CD4-positive, alpha-beta T cell (primary cell): ENCODE measurements at regions of chr11 and their contacts with region 1.

Region 1: DNA sequence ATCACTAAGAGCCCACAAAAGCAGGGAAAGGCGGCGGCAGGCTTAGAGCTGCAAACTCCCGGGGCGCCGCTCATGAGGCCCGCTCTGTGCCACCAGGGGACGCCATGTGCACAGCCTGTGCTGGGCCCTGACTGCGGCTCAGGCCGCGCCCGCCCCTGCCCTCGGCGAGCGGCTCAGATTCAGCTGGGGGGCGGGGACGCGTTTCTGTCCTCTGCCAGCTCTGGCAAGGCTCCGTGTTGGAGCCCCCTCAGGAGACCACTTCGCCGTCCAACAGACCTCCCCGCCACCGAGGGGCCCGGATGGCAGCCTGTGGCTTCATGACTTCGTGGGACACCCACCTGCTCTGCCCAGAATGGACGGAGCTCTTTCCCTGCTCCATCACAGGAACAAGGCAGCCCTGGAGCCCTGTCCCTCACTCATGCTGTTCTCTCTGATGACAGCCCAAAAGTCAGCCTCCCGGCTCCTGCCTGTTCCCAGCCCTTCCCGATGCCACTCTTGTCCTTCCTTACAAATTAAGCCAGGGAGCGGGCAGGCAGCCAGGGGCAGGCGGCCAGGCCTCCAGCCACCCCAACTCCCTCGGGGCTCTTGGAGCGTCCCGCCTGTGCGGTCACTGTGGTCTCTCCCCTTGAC is 69.1 kb downstream of the NAT10 start:
- DNase-seq: peak; percentile 65 to 88 (median 74)
- ATAC-seq: peak; percentile 99
- H3K4me3 ChIP-seq: peak overlapping the region; percentile 28
- H3K4me3 Mint-ChIP-seq: no peak overlapping the region
- H3K27ac ChIP-seq: no peak overlapping the region
- H3K27ac Mint-ChIP-seq: no peak overlapping the region
- H3K4me1 ChIP-seq: peaks cover 12% of the 10 kb centered on the region
- H3K4me1 Mint-ChIP-seq: no peaks in the 10 kb centered on the region
- H3K27me3 ChIP-seq: peaks cover 0 to 2% of the 10 kb centered on the region in 2 experiments
- H3K27me3 Mint-ChIP-seq: no peaks in the 10 kb centered on the region
- CTCF ChIP-seq: peak; percentile 79

Region 2: DNA sequence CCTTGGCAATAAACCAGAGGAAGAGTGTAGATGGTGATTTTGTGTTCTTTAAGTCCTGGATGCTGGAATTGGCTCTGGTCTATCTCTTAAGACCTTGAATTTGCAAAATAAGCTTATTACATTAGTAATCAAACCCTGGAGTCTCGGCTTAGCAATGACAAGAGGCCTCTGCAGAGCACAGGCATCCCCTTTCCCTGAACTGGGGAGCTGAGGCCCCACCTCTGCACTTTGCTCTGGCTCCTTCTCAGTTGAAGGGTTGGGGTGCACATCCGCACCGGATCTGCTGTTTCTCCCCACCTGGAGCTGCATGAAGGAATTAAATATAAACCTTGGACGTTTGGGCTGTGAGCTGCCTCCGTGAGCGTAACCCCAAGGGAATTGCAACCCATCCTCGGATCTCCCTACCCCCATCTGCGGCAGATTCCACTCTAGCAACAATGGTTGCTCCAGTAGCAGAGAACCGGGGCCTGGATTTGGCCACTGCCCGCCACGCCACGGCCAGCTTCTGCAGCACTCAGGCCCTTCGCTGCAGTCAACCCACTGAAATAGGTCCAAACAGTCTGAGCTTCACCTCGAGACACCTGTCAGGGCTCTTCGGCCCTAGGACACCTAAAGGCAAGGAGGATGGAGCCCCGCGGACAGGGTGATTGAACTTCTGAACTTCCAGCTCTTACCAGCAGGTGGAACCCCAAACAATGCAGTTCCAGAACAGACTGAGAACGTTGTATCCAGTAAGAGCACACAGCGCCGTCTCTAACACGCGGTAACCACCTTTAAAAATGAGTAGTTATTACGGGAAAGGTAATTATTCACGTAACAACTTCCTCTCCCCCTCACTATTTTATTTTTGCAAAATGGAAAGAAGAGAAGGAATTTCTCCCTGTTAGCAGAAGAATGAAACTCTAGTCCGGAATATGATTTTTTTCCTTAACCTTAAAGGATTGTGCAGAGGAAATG is 177.8 kb before region 1 on chr11:
- CTCF ChIA-PET with region 1: interaction called, 7 read pairs
- POLR2A ChIA-PET with region 1: interaction called, 4 read pairs
- intact Hi-C with region 1: loop called (anchors 2 to 5 kb)
- DNase-seq: peak; percentile 53 to 85 (median 66)
- ATAC-seq: peak; percentile 100
- H3K4me3 ChIP-seq: no peak overlapping the region
- H3K4me3 Mint-ChIP-seq: peak overlapping the region; percentile 55
- H3K27ac ChIP-seq: no peak overlapping the region
- H3K27ac Mint-ChIP-seq: no peak overlapping the region
- H3K4me1 ChIP-seq: peaks cover 7% of the 10 kb centered on the region
- H3K4me1 Mint-ChIP-seq: peaks cover 7% of the 10 kb centered on the region
- H3K27me3 ChIP-seq: no peaks in the 10 kb centered on the region
- H3K27me3 Mint-ChIP-seq: peaks cover 23% of the 10 kb centered on the region
- CTCF ChIP-seq: peak; percentile 76

Region 3: GRCh38 chr11:34234086-34234740 is 59.7 kb after region 1 on chr11:
- CTCF ChIA-PET with region 1: interaction called, 15 read pairs
- POLR2A ChIA-PET with region 1: no interaction called
- intact Hi-C with region 1: loop called in 1 of 2 experiments (anchors 2 kb)
- DNase-seq: peak; percentile 37 to 93 (median 72)
- ATAC-seq: peak; percentile 99
- H3K4me3 ChIP-seq: no peak overlapping the region
- H3K4me3 Mint-ChIP-seq: no peak overlapping the region
- H3K27ac ChIP-seq: no peak overlapping the region
- H3K27ac Mint-ChIP-seq: peak overlapping the region; percentile 42
- H3K4me1 ChIP-seq: peaks cover 21% of the 10 kb centered on the region
- H3K4me1 Mint-ChIP-seq: peaks cover 19% of the 10 kb centered on the region
- H3K27me3 ChIP-seq: no peaks in the 10 kb centered on the region
- H3K27me3 Mint-ChIP-seq: no peaks in the 10 kb centered on the region
- CTCF ChIP-seq: no peak

Region 4: DNA sequence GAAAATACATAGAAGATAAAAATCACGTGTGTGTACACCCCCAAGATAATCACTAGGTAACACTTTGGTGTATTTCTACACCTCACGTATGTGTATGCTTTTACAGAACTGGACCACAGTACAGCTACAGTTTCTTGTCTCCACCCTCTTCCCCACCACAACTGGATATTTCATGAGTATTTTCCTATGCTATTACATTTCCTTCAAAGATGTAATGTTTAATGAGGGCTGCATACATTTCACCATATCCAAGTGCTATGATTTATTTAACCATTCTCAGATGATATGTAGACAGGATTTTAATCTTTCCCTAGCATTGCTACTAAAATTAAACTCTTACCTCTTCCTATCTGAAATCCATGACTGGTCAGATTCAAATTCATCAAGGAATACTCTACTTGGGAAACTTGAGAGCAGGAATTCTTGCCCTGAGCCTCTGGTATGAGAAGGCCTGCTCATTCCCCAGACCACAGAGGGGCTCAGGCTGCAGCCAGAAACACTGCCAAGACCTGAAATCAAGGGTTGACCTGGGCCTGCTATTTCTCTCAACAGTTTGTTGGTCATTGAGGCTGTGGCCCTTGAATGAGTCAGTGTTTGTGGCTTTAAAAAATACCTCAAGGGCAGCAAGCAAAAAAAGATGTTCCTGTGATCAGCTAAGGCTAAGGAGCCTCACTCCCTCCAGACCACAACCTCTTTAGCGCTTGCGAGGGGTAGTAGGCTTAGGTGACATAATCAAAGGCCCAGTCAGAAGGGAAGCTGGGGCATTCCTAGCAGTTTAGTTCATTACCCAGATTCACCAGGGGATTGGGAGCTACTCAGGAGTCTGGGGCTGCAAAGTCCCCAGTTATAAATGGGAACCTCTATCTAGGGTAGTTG is 127.8 kb after region 1 on chr11:
- CTCF ChIA-PET with region 1: no interaction called
- POLR2A ChIA-PET with region 1: no interaction called
- intact Hi-C with region 1: no loop called
- DNase-seq: peak in 1 of 14 experiments; percentile 14
- ATAC-seq: no peak
- H3K4me3 ChIP-seq: no peak overlapping the region
- H3K4me3 Mint-ChIP-seq: no peak overlapping the region
- H3K27ac ChIP-seq: no peak overlapping the region
- H3K27ac Mint-ChIP-seq: no peak overlapping the region
- H3K4me1 ChIP-seq: no peaks in the 10 kb centered on the region
- H3K4me1 Mint-ChIP-seq: peaks cover 6% of the 10 kb centered on the region
- H3K27me3 ChIP-seq: no peaks in the 10 kb centered on the region
- H3K27me3 Mint-ChIP-seq: no peaks in the 10 kb centered on the region
- CTCF ChIP-seq: no peak

Region 5: DNA sequence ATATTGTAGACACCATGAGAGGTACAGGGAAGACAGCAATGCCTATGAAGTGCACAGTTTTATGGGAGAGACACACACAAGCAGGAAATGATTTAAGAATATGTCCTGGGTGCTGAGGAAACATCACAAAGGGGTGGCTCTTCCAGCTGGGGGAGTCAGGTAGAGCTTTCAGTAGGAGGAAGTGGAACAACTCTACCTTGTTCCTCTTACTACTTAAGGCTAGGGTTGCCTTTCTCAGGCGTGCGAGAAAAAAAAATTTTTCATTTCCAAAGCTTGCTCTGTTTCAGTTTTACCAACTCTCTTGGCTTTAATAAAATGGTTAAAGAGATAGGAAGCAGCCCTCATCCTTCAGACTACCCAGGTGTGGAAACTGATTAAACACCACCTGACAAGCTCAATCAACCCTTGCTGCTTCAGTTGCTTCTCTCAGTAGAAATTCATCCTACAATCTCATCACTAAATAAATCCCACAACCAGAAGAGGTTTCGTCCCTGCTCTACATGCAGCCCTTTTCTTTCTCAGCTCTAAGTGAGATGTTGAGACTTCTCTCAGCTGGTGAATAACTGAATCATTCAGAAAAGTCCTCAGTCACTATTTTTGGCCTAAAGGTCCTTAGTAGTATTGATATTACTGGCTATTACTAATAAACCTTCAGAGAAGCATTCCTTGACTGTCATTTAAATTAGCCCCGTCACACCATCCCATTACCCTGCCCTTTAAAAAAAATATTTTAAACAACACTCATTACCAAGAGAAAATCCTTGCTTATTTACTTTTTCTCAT is 177.4 kb after region 1 on chr11:
- CTCF ChIA-PET with region 1: interaction called, 47 read pairs
- POLR2A ChIA-PET with region 1: interaction called, 5 read pairs
- intact Hi-C with region 1: no loop called
- DNase-seq: no peak
- ATAC-seq: no peak
- H3K4me3 ChIP-seq: no peak overlapping the region
- H3K4me3 Mint-ChIP-seq: no peak overlapping the region
- H3K27ac ChIP-seq: no peak overlapping the region
- H3K27ac Mint-ChIP-seq: no peak overlapping the region
- H3K4me1 ChIP-seq: peaks cover 11% of the 10 kb centered on the region
- H3K4me1 Mint-ChIP-seq: peaks cover 9% of the 10 kb centered on the region
- H3K27me3 ChIP-seq: peaks cover 18 to 36% of the 10 kb centered on the region in 2 experiments
- H3K27me3 Mint-ChIP-seq: peaks cover 59% of the 10 kb centered on the region
- CTCF ChIP-seq: no peak

Region 6: GRCh38 chr11:34438529-34439507 is 264.3 kb after region 1 on chr11 and contains the start of gene CAT:
- CTCF ChIA-PET with region 1: interaction called, 7 read pairs
- POLR2A ChIA-PET with region 1: no interaction called
- intact Hi-C with region 1: loop called in 1 of 2 experiments (anchors 5 kb)
- DNase-seq: peak; percentile 93 to 98 (median 98)
- ATAC-seq: peak; percentile 95
- H3K4me3 ChIP-seq: peak within 1 kb of the TSS; percentile 81
- H3K4me3 Mint-ChIP-seq: peak within 1 kb of the TSS; percentile 93
- H3K27ac ChIP-seq: peak within 1 kb of the TSS; percentile 57 to 77
- H3K27ac Mint-ChIP-seq: peak within 1 kb of the TSS; percentile 88
- H3K4me1 ChIP-seq: peaks cover 22% of the 10 kb centered on the region
- H3K4me1 Mint-ChIP-seq: peaks cover 47% of the 10 kb centered on the region
- H3K27me3 ChIP-seq: no peaks in the 10 kb centered on the region
- H3K27me3 Mint-ChIP-seq: no peaks in the 10 kb centered on the region
- CTCF ChIP-seq: no peak
- total RNA-seq, gene CAT: 8.5 to 9.8 TPM

Region 7: DNA sequence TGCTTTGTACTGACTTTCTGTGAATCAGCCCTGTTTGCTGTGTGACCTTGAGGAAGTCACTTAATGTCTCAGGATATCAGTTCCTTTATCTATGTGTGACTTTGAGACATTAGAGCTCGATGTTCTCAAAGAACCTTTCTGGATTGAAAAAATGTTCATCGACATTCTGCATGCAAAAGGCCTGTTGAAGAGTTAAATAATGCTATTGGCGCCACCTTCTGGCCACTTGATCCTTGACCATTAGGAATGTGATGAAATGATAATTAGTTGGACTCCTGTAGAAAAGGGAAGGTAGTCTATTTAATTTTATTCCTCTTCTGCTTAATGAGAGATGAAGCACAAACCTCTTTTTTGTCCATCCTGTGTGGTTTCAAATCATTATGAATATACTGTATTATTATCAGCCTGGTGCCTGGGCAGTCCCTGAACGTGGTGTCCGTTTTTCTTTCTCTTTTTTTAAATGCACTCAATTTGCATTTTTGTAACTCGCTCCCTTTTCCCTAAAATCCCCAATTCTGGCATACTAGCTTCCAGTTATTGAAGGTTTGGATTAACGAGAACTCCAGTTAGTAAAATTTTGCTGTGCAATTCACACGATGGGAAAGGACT is 318.4 kb after region 1 on chr11:
- CTCF ChIA-PET with region 1: interaction called, 4 read pairs
- POLR2A ChIA-PET with region 1: no interaction called
- intact Hi-C with region 1: loop called in 1 of 2 experiments (anchors 1 kb)
- DNase-seq: peak in 12 of 14 experiments; percentile 7 to 64 (median 17)
- ATAC-seq: no peak
- H3K4me3 ChIP-seq: no peak overlapping the region
- H3K4me3 Mint-ChIP-seq: no peak overlapping the region
- H3K27ac ChIP-seq: no peak overlapping the region
- H3K27ac Mint-ChIP-seq: no peak overlapping the region
- H3K4me1 ChIP-seq: no peaks in the 10 kb centered on the region
- H3K4me1 Mint-ChIP-seq: no peaks in the 10 kb centered on the region
- H3K27me3 ChIP-seq: peaks cover 2 to 3% of the 10 kb centered on the region in 2 experiments
- H3K27me3 Mint-ChIP-seq: peaks cover 5% of the 10 kb centered on the region
- CTCF ChIP-seq: peak; percentile 71